ENCODE measurements at regions of chr17 and their contacts with region 1.

Region 1: GRCh38 chr17:38667099-38667786 is 7.5 kb downstream of the EPOP start:
- DNase-seq: peak; percentile 72
- ATAC-seq: peak; percentile 70
- H3K4me3 Mint-ChIP-seq: no peak overlapping the region
- H3K27ac Mint-ChIP-seq: no peak overlapping the region
- H3K4me1 Mint-ChIP-seq: peaks cover 9% of the 10 kb centered on the region
- H3K27me3 Mint-ChIP-seq: peaks cover 49% of the 10 kb centered on the region

Region 2: DNA sequence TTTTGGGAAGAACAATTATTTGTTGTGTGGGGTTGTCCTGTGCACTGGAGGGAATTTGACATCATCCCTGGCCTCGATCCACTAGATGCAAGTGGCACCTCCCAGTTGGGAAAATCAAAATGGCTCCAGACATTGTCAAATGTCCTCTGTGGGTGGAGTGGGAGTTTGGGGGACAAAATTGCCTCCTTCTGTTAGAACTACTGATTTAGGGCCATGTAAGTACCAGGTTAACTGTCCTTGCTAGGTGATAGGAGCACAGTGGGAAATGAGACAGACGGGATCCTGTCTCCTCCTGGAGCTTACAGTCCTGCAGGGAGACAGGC is 182.1 kb before region 1 on chr17:
- CTCF ChIA-PET with region 1: interaction called, 42 read pairs
- POLR2A ChIA-PET with region 1: no interaction called
- DNase-seq: no peak
- ATAC-seq: no peak
- H3K4me3 Mint-ChIP-seq: no peak overlapping the region
- H3K27ac Mint-ChIP-seq: no peak overlapping the region
- H3K4me1 Mint-ChIP-seq: peaks cover 5% of the 10 kb centered on the region
- H3K27me3 Mint-ChIP-seq: peaks cover 10% of the 10 kb centered on the region

Region 3: DNA sequence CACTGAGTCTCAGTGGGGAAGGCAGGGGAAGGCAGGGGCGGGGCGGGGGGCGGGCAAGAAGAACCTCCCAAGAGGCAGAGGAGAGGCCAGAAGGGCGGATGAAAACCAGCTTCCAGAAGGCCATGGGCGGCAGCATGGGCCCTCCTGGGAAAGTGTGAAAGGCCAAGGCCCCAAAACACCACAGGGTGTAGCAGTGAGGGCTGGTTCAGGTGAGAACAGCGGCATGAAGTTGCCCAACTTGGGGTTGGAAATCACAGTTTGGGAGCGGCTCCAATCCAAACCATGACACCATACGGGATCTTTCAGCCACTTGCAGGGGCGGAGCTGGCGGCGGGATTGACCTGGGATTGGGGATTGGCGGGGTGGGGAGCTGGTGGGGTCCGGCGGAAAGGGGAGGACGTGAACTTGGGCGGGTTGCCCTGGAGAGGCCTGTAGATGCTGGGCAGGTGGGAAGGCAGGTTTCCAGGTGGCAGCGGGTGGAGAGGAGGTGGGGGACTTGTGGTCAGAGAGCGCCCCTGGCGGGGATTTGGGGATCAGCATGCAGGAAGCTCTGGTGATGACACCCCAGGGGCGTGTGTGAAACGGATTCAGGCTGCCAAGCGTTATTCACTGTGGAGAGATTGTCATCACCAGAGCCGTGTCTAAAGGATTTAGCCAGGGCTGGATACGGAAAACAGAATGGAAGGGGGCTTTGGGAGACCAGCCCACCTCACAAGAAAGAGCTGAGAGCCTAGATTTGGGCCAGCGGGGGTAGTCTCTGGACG is 158.1 kb before region 1 on chr17:
- CTCF ChIA-PET with region 1: interaction called, 19 read pairs
- POLR2A ChIA-PET with region 1: no interaction called
- DNase-seq: peak; percentile 79
- ATAC-seq: peak; percentile 87
- H3K4me3 Mint-ChIP-seq: peak overlapping the region; percentile 60
- H3K27ac Mint-ChIP-seq: peak overlapping the region; percentile 58
- H3K4me1 Mint-ChIP-seq: peaks cover 7% of the 10 kb centered on the region
- H3K27me3 Mint-ChIP-seq: peaks cover 32% of the 10 kb centered on the region

Region 4: GRCh38 chr17:38575781-38576180 is 91.5 kb before region 1 on chr17:
- CTCF ChIA-PET with region 1: no interaction called
- POLR2A ChIA-PET with region 1: no interaction called
- DNase-seq: no peak
- ATAC-seq: no peak
- H3K4me3 Mint-ChIP-seq: no peak overlapping the region
- H3K27ac Mint-ChIP-seq: no peak overlapping the region
- H3K4me1 Mint-ChIP-seq: peaks cover 2% of the 10 kb centered on the region
- H3K27me3 Mint-ChIP-seq: peaks cover 85% of the 10 kb centered on the region

Region 5: DNA sequence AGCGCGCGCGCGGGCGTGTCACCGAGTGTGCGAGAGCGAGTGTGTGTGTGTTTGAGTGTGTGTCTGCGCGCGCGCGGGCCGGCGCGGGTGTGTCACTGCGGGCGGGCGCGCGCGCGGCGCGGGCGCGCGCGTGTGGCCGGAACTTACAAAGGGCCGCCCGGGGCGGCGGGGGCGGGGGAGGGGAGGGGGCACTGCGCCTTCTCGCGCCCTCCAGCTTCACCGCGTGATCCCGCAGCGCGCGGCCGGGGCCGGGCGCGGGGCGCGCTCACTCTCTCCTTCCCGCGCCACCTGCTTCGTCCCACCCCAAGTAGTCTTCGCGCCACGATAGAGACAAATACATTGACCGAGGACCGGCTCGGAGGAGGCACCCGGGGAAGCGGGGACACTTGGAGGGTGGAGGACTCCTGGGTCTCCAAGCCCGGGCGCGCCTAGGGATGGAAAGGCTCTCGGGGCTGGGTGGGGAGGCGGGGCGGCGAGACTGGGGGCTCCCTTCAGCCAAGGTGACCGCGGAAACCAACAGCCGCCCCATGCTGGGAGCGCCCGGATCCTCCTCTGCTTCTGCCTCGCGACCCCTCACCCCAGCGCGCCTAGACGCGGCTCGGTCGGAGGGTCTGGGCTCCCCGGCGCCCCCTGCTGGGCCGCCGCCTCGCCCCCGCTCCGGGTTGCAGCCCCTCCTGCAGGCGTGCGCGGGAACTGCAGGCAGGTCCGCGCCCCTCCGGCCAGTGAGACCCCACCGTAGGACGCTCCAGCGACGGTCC is 61.2 kb before region 1 on chr17 and contains the start of gene SRCIN1:
- CTCF ChIA-PET with region 1: interaction called, 11 read pairs
- POLR2A ChIA-PET with region 1: interaction called, 4 read pairs
- DNase-seq: peak; percentile 61
- ATAC-seq: peak; percentile 50
- H3K4me3 Mint-ChIP-seq: peak within 1 kb of the TSS; percentile 63
- H3K27ac Mint-ChIP-seq: no peak within 1 kb of the TSS
- H3K4me1 Mint-ChIP-seq: peaks cover 19% of the 10 kb centered on the region
- H3K27me3 Mint-ChIP-seq: peaks cover 67% of the 10 kb centered on the region
- total RNA-seq, gene SRCIN1: 0.34 TPM in 1 of 2 experiments, not detected in the other

Region 6: GRCh38 chr17:38654411-38655398 is 12.5 kb before region 1 on chr17:
- CTCF ChIA-PET with region 1: interaction called, 15 read pairs
- POLR2A ChIA-PET with region 1: interaction called, 3 read pairs
- DNase-seq: no peak
- ATAC-seq: peak; percentile 57
- H3K4me3 Mint-ChIP-seq: no peak overlapping the region
- H3K27ac Mint-ChIP-seq: no peak overlapping the region
- H3K4me1 Mint-ChIP-seq: peaks cover 27% of the 10 kb centered on the region
- H3K27me3 Mint-ChIP-seq: peaks cover 10% of the 10 kb centered on the region